Activated CD4-positive, alpha-beta T cell treated with anti-CD3 and anti-CD28 coated beads for 36 hours (primary cell): ENCODE measurements at regions of chr19 and their contacts with region 1.

Region 1: GRCh38 chr19:21082011-21082975 is at the start of gene ZNF714:
- DNase-seq: peak; percentile 89
- ATAC-seq: peak; percentile 98
- H3K4me3 Mint-ChIP-seq: peak within 1 kb of the TSS; percentile 99
- H3K27ac Mint-ChIP-seq: peak within 1 kb of the TSS; percentile 97
- H3K4me1 Mint-ChIP-seq: peaks cover 24% of the 10 kb centered on the region
- H3K27me3 Mint-ChIP-seq: no peaks in the 10 kb centered on the region
- total RNA-seq, gene ZNF714: 17.4 to 20.0 TPM

Region 2: DNA sequence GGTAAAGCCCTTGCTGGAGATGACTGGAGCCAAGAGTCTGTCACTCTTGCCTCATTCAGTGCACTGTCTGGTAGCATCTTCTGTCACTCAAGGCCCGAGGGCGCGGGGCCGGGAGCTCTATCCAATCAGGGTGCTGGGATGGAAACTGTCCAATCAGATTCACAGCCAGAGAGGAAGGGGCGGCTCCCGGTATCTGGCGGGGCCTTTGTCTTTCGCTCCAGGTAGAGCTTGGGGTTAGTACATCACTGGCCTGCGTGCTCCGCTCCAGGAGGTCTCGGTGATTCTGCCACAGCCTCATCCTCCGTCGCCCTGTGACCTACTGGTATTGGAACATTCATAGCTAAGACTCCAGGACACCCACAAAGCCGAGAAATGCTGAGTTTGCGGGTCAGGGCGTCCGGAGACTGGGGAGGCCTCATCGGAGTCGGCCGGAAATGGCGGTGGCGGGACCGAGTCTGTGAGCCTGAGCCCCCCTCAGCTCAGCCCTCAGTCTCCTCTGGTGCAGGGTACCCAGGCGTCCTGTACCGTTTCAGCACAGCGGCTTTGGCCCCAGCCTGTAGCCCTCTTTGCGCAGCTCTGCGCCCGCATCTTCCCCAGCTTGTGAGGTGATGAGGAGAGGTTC is 82.5 kb before region 1 on chr19:
- CTCF ChIA-PET with region 1: no interaction called
- POLR2A ChIA-PET with region 1: interaction called, 5 read pairs
- intact Hi-C with region 1: loop called in 1 of 2 experiments (anchors 1 kb)
- DNase-seq: peak; percentile 95
- ATAC-seq: peak; percentile 100
- H3K4me3 Mint-ChIP-seq: peak overlapping the region; percentile 89
- H3K27ac Mint-ChIP-seq: peak overlapping the region; percentile 91
- H3K4me1 Mint-ChIP-seq: peaks cover 9% of the 10 kb centered on the region
- H3K27me3 Mint-ChIP-seq: no peaks in the 10 kb centered on the region